WTC11 (cell line): ENCODE measurements at regions of chr1 and their contacts with region 1.

Region 1: DNA sequence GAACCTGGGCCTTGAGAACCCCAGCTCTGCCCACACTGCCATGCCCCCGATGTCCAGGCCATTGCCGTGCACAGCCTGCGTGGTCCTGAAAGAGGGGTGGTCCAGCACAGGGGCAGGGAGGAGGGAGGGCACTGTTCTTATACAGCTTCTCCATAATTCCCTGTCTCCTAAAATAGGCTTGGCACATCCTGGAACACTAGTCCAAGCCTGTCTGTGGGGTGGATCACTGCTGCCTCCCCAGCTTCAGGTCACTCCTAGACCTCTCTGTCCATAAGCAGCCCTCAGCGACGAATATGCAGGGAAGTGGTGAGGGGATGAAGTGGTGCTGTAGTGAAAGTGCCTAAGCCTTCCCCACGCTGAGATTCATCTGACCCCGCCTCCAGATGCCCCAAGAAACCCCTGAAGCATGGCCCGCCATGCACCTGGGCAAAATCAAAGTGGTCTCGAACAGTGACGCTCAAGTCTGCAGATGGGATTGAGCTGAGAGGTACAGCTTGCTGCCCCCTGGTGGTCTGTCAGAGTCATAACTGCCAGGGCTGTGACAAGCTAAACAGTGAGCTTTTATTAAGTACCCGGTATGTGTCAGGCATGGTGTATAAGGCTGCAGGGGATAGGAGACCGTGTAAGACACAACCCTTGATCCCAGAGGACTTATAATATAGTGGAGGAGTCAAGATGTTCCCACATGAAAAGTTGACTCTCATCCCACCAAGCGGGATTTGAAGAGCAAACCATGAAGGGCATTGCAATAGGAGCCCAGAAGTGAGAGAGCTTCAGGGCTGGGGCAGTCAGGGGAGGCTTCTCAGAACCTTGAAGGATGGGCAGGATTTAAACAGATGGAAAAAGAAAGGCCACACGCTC is 66.6 kb downstream of the FAM163A start:
- DNase-seq: peak; percentile 75
- ATAC-seq: peak; percentile 75
- H3K4me3 Mint-ChIP-seq: no peak overlapping the region
- H3K27ac Mint-ChIP-seq: no peak overlapping the region
- H3K4me1 Mint-ChIP-seq: no peaks in the 10 kb centered on the region
- H3K27me3 Mint-ChIP-seq: peaks cover 6% of the 10 kb centered on the region
- CTCF ChIP-seq: peak; percentile 95

Region 2: GRCh38 chr1:179087665-179088225 is 722.0 kb before region 1 on chr1:
- CTCF ChIA-PET with region 1: interaction called, 11 read pairs
- POLR2A ChIA-PET with region 1: interaction called, 4 read pairs
- DNase-seq: peak; percentile 77
- ATAC-seq: peak; percentile 80
- H3K4me3 Mint-ChIP-seq: peak overlapping the region; percentile 65
- H3K27ac Mint-ChIP-seq: peak overlapping the region; percentile 93
- H3K4me1 Mint-ChIP-seq: peaks cover 38% of the 10 kb centered on the region
- H3K27me3 Mint-ChIP-seq: no peaks in the 10 kb centered on the region
- CTCF ChIP-seq: no peak

Region 3: DNA sequence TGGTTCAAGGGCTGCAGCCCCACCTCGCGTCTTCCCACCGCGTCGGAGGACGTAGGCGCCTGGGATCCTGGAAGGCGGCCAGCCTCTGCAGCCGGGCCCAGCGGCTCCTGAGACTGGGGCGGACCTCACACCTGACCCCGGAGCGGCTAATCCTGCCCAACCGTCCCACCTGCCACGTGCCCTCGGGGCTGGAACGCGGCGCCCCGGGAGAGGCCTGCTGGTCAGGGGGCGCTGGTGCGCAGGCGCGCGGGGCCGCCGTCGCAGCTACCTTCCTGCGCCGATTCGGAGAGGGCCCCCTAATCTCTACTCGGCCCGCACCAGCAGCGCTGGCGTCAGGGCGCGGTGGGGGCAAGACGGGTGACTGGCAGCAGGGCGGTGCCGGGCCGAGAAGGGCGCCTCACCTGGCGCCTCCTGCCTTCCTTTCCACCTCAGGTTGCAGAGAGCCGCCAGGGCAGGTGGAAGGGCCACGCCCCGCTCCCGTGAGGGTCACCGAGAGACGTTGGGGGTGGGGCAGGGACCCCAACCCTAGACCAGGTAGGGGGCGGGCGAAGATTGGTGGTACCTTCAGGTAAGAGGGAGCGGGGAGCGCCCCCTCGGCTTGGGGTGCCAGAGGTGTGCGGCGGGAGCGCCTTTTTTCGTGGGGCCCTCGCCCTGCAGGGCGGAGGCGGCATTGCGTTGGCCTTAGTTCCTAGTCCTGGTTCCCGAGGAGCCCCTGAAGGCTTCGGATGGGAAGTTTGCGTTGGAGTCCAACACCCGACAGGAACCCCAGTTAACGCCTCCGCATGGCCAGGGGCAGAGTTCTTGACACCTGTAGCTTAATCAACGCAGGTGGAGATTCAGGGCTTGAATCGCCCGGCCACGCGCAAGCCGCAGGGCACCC is 217.9 kb before region 1 on chr1 and contains the start of gene TDRD5:
- CTCF ChIA-PET with region 1: interaction called, 17 read pairs
- POLR2A ChIA-PET with region 1: no interaction called
- DNase-seq: peak; percentile 81
- ATAC-seq: peak; percentile 83
- H3K4me3 Mint-ChIP-seq: peak within 1 kb of the TSS; percentile 51
- H3K27ac Mint-ChIP-seq: no peak within 1 kb of the TSS
- H3K4me1 Mint-ChIP-seq: peaks cover 7% of the 10 kb centered on the region
- H3K27me3 Mint-ChIP-seq: peaks cover 86% of the 10 kb centered on the region
- CTCF ChIP-seq: no peak
- total RNA-seq, gene TDRD5: 0.66 to 1.1 TPM (median 0.85 TPM) in 3 replicates

Region 4: DNA sequence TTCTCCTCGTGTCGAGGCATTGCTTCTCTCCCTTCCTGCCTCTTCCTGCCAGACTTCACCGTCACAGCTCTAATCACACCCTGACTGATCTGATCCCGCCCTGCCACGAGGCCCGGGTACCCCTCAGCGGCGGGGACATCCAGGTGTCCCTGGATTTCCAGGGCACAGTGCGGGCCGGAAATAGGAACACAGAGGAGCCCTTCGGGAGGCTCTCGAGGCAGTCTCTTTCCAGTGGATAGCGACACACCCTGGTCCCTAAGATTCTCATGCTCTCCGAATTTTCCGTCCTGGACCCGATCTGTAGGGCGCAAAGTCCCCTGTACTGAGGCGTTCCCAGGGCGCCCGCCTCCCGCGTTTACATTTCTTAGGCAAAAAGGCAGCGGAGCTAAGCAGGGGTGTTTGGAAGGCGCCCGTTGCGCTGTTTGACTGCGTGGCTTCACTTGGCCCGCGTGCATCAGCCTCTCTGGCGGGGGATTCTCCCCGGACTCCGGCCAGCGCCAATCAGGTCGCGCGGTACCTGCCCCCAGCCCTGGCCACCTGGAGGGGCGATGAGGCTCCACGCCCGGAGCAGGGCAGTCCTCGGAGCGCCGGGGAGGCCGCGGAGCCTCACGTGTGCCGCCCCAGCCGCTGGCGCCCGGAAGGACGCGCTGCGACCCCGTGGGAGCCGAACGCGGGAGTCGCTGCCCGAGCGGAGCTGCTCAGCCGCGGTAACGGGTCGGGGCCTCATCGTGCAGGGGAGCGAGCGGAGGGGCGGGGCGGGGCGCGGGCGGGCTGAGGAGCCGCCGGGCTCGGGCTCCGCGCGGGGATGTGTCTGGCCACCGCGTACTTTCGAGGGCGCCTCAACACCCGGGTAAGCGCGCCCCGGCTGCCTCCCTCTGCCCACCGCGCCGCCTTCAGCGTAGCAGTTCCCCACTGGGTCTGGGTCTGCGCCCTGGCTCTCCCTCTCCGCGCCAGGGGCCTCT is 66.7 kb before region 1 on chr1 and contains the start of gene FAM163A:
- CTCF ChIA-PET with region 1: interaction called, 18 read pairs
- POLR2A ChIA-PET with region 1: no interaction called
- DNase-seq: peak; percentile 48
- ATAC-seq: peak; percentile 49
- H3K4me3 Mint-ChIP-seq: peak within 1 kb of the TSS; percentile 70
- H3K27ac Mint-ChIP-seq: no peak within 1 kb of the TSS
- H3K4me1 Mint-ChIP-seq: peaks cover 16% of the 10 kb centered on the region
- H3K27me3 Mint-ChIP-seq: peaks cover 84% of the 10 kb centered on the region
- CTCF ChIP-seq: no peak
- total RNA-seq, gene FAM163A: 0.07 to 0.09 TPM (median 0.07 TPM) in 3 replicates

Region 5: GRCh38 chr1:179770884-179771502 is 38.7 kb before region 1 on chr1:
- CTCF ChIA-PET with region 1: interaction called, 35 read pairs
- POLR2A ChIA-PET with region 1: interaction called, 6 read pairs
- DNase-seq: no peak
- ATAC-seq: peak; percentile 84
- H3K4me3 Mint-ChIP-seq: no peak overlapping the region
- H3K27ac Mint-ChIP-seq: no peak overlapping the region
- H3K4me1 Mint-ChIP-seq: peaks cover 3% of the 10 kb centered on the region
- H3K27me3 Mint-ChIP-seq: no peaks in the 10 kb centered on the region
- CTCF ChIP-seq: no peak

Region 6: GRCh38 chr1:179794669-179795068 is 15.1 kb before region 1 on chr1:
- CTCF ChIA-PET with region 1: interaction called, 35 read pairs
- POLR2A ChIA-PET with region 1: no interaction called
- DNase-seq: no peak
- ATAC-seq: peak; percentile 30
- H3K4me3 Mint-ChIP-seq: no peak overlapping the region
- H3K27ac Mint-ChIP-seq: no peak overlapping the region
- H3K4me1 Mint-ChIP-seq: peaks cover 9% of the 10 kb centered on the region
- H3K27me3 Mint-ChIP-seq: no peaks in the 10 kb centered on the region
- CTCF ChIP-seq: no peak

Region 7: GRCh38 chr1:179882243-179883039 is 72.7 kb after region 1 on chr1 and contains the start of gene TOR1AIP1:
- CTCF ChIA-PET with region 1: interaction called, 14 read pairs
- POLR2A ChIA-PET with region 1: no interaction called
- DNase-seq: peak; percentile 97
- ATAC-seq: peak; percentile 79
- H3K4me3 Mint-ChIP-seq: peak within 1 kb of the TSS; percentile 96
- H3K27ac Mint-ChIP-seq: peak within 1 kb of the TSS; percentile 100
- H3K4me1 Mint-ChIP-seq: peaks cover 28% of the 10 kb centered on the region
- H3K27me3 Mint-ChIP-seq: no peaks in the 10 kb centered on the region
- CTCF ChIP-seq: no peak
- total RNA-seq, gene TOR1AIP1: 17.3 to 18.7 TPM (median 17.7 TPM) in 3 replicates